Lower lobe of right lung (tissue), 2 donors: ENCODE measurements at regions of chr11 and their contacts with region 1.

Region 1: DNA sequence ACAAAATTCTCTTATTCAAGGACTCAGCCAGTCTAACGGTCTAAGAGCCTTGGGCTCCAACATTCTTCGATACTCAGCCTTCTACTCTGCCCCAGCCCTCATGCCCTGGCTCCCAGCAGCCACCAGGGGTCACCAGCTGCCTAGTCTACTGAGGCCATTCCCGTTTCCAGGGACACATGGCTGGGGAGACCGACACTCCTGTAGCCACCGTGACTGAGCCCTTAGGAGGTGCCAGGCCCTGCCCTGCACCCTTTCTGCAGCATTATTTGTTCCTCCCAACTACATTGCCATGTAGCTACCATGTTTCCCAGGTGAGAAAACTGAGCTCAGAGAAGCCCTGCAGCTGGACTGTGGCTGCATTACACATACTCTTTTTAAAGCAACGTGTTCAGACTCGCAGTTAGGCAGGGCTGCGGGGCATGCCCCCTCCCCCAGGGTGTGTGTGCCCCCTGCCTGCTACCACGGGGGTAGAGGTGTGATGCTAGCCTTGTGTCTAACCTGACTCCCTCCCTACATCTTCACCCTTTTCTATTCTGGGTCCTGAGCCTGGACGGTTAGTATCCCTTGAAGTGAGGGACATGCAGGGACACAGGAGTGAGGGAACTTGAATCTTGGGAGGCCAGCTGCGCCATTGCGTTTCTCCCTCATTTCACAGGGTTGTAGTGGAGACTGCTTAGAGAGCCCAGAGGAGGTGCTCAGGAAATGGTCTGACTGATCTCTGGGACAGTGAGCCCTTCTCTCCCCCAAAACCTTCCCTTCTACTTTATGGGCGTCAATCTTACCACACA is 17.5 kb downstream of the ATG16L2 start:
- DNase-seq: peak; percentile 85
- ATAC-seq: peak; percentile 82 to 85
- H3K4me3 ChIP-seq: no peak overlapping the region
- H3K27ac ChIP-seq: peak overlapping the region; percentile 48
- H3K4me1 ChIP-seq: peaks cover 67% of the 10 kb centered on the region
- H3K27me3 ChIP-seq: no peaks in the 10 kb centered on the region
- CTCF ChIP-seq: peak; percentile 94

Region 2: DNA sequence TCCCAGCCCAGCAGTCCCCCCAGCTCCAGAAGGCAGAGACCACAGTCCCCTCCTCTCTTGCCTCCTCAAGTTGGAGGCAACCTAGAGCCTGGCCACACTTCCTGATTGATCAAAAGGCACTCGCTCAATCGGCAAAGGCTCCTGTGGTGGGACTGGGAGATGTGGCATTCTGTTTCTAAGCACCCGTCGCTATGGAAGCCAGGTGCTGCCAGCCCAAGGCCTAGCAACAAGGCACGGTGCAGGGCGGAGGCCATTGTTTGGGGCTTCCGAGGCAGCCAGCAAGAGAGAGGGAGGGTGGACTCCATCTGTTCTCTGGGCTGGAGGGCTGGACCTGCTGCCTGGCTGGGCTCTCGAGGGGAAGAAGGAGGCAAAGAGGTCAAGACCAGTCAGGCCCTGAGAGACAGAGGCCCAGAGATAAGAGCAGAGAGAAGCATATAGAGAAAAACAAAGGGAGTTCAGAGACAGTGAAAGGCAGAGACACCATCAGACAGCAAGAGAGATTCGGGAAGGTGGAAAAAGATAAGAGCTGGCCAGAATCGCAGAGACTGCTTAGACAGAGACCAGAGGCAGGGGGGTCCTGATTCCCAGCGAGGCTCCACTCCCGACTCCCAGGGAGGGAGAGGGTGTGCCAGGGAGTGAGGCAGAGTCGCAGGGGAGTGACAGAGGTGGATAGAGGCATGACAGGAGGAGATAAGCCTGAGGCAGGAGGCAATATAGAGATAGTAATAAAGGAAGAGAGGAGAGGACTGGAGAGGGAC is 178.7 kb before region 1 on chr11:
- intact Hi-C with region 1: no loop called
- DNase-seq: no peak
- ATAC-seq: no peak
- H3K4me3 ChIP-seq: no peak overlapping the region
- H3K27ac ChIP-seq: no peak overlapping the region
- H3K4me1 ChIP-seq: no peaks in the 10 kb centered on the region
- H3K27me3 ChIP-seq: peaks cover 8% of the 10 kb centered on the region
- CTCF ChIP-seq: no peak

Region 3: GRCh38 chr11:72703267-72704008 is 128.3 kb before region 1 on chr11:
- intact Hi-C with region 1: no loop called
- DNase-seq: no peak
- ATAC-seq: peak; percentile 64 to 67
- H3K4me3 ChIP-seq: no peak overlapping the region
- H3K27ac ChIP-seq: peak overlapping the region; percentile 53
- H3K4me1 ChIP-seq: peaks cover 34% of the 10 kb centered on the region
- H3K27me3 ChIP-seq: no peaks in the 10 kb centered on the region
- CTCF ChIP-seq: no peak

Region 4: GRCh38 chr11:72899238-72899637 is 67.5 kb after region 1 on chr11:
- intact Hi-C with region 1: no loop called
- DNase-seq: no peak
- ATAC-seq: no peak
- H3K4me3 ChIP-seq: no peak overlapping the region
- H3K27ac ChIP-seq: no peak overlapping the region
- H3K4me1 ChIP-seq: no peaks in the 10 kb centered on the region
- H3K27me3 ChIP-seq: no peaks in the 10 kb centered on the region
- CTCF ChIP-seq: no peak

Region 5: GRCh38 chr11:73177778-73178577 is 346.3 kb after region 1 on chr11:
- intact Hi-C with region 1: loop called (anchors 10 kb)
- DNase-seq: peak; percentile 89
- ATAC-seq: peak; percentile 95
- H3K4me3 ChIP-seq: no peak overlapping the region
- H3K27ac ChIP-seq: peak overlapping the region; percentile 72
- H3K4me1 ChIP-seq: peaks cover 30% of the 10 kb centered on the region
- H3K27me3 ChIP-seq: no peaks in the 10 kb centered on the region
- CTCF ChIP-seq: peak; percentile 87